Activated naive CD4-positive, alpha-beta T cell treated with anti-CD3 and anti-CD28 coated beads for 36 hours (primary cell): ENCODE measurements at regions of chr11 and their contacts with region 1.

Region 1: DNA sequence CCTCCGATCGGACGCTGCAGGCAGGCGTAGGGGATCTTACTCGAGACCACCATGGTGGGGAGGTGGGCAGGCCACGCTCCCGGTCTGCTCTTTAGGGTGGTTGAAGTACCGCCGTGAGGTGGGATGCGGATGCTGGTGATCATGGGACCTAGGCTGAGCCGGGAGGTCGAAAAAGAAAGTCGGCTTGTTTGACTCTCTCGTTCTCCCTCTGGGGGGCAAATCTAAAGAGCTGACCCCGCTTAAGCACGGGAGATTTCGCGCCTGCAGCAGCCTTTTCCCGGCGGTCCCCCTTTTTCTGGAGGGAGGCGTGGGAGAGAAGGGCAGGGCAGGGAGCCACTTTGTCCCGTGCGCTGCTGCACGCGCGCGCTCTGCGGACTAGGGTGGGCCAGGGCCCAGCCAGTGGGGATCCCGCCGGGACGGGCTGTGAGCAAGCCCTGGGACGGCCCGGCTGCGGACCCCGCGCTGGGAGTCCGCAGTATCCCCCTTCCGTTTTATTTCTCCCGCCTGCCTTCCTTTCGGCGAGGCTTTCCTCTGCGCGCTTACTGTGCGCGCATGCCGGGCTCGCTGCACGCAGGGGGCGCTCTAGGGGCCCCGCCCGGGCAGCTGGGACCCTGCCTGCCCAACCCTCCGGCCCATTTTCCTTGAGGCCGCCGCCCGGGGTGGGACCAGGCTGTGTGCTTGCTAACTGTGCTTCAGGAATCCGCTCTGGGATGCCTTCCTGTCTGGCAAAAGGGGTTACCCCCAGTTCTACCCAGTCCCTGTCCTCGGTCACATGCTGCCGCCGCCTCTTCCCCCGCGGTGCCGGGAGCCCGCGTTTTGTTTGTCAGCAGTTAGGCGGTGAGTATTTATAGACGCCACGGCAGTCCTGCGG is 81.0 kb downstream of the PRR5L start:
- DNase-seq: peak; percentile 60
- H3K4me3 Mint-ChIP-seq: peak overlapping the region; percentile 85
- H3K27ac Mint-ChIP-seq: no peak overlapping the region
- H3K4me1 Mint-ChIP-seq: peaks cover 24% of the 10 kb centered on the region
- H3K27me3 Mint-ChIP-seq: peaks cover 64% of the 10 kb centered on the region

Region 2: GRCh38 chr11:36354221-36355003 is 22.7 kb before region 1 on chr11:
- CTCF ChIA-PET with region 1: interaction called, 5 read pairs
- intact Hi-C with region 1: loop called (anchors 1 kb)
- DNase-seq: no peak
- H3K4me3 Mint-ChIP-seq: no peak overlapping the region
- H3K27ac Mint-ChIP-seq: peak overlapping the region; percentile 16
- H3K4me1 Mint-ChIP-seq: peaks cover 49% of the 10 kb centered on the region
- H3K27me3 Mint-ChIP-seq: peaks cover 18% of the 10 kb centered on the region

Region 3: DNA sequence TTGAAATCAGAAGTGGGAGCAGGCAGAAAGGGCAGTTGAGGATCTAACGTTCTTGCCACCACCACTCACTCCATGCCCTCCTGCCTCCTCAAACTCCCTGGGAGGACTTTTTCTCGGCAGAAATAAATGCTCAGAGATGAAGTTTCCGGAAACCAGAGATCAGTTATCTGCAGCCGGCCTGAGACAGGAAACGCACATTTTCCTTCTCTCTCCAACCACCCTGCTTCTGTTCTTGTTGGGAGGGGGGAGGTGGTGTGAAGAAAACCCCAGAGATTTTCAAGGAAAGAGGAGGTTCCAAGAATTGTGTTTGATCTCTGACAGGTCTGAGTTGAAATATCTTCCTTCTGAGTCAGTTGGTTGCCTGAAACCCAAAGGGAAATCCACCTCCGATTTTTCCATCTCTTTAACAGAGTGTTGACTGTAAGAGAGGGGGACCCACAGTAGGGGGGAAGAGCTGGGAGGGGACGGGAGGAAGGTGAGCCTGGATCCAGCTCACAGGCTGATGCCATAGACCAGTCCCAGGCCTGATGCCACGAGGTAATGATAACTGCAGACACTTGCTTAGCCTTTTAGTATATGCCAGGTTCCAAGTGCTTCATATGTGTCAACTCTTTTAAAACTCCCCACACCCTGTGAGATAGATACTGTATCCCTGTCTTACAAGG is 32.2 kb after region 1 on chr11:
- CTCF ChIA-PET with region 1: interaction called, 4 read pairs
- intact Hi-C with region 1: loop called (anchors 2 kb)
- DNase-seq: peak; percentile 68
- H3K4me3 Mint-ChIP-seq: peak overlapping the region; percentile 10
- H3K27ac Mint-ChIP-seq: peak overlapping the region; percentile 87
- H3K4me1 Mint-ChIP-seq: peaks cover 44% of the 10 kb centered on the region
- H3K27me3 Mint-ChIP-seq: no peaks in the 10 kb centered on the region

Region 4: DNA sequence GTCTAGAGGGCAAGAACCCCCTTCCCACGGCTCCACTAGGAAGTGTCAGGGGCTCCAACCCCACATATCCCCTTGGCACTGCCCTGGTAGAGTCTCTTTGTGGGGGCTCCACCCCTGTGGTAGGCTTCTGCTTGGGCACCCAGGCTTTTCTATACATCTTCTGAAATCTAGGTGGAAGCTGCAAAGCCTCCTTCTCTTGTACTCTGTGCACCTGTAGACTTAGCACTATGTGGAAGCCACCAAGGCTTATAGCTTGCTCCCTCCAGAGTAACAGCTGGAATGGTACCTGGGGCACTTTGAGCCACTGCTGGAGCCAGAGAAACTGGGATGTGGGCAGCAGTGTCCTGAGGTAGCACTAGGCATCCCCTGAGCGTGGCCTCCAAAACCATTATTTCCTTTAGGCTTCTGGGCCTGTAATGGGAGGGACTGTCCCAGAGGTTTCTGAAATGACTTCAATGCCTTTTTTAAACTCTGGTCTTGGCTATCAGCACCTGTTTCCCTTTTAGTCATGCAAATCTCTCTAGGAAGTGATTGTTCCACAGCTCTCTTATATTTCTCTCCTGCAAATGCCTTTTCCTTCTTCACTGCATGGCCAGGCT is 64.6 kb after region 1 on chr11:
- CTCF ChIA-PET with region 1: interaction called, 3 read pairs
- intact Hi-C with region 1: loop called (anchors 2 kb)
- DNase-seq: peak; percentile 53
- H3K4me3 Mint-ChIP-seq: no peak overlapping the region
- H3K27ac Mint-ChIP-seq: no peak overlapping the region
- H3K4me1 Mint-ChIP-seq: peaks cover 12% of the 10 kb centered on the region
- H3K27me3 Mint-ChIP-seq: no peaks in the 10 kb centered on the region

Region 5: DNA sequence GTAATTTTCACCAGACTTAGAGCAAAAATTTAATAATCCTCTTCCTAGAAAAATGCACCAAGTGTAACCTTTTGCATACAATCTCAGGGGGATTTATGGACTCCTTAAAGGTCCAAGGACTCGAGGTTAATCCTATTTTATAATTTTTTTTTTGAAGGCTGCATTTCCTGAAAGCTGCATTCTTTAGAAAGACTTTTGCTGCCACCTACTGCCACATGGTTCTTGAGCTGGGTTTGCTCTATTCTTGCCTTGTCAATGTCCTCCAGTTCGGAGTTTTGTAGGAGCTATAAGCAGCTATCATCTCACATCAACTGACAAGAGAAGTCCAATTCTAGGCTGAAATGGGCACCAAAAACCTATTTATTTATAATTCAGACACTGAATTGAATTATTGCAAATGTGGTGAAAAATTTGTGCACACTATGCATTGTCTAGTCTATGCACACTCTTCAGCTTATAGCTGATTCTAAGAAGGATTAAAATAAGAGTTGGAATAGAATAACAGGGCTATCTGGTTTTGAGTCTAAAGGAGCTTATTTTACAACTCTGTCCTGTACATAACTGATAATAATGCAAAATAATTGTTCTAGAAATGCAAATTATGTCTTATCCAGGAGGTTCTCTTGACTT is 101.7 kb after region 1 on chr11:
- CTCF ChIA-PET with region 1: no interaction called
- intact Hi-C with region 1: loop called (anchors 1 kb)
- DNase-seq: peak; percentile 62
- H3K4me3 Mint-ChIP-seq: no peak overlapping the region
- H3K27ac Mint-ChIP-seq: no peak overlapping the region
- H3K4me1 Mint-ChIP-seq: peaks cover 2% of the 10 kb centered on the region
- H3K27me3 Mint-ChIP-seq: no peaks in the 10 kb centered on the region